ENCODE measurements at regions of chr10 and their contacts with region 1.

Region 1: GRCh38 chr10:133329491-133330202 is 7.0 kb downstream of the CALY start:
- DNase-seq: peak; percentile 87
- ATAC-seq: peak; percentile 83
- H3K4me3 ChIP-seq: peak overlapping the region; percentile 60
- H3K27ac ChIP-seq: no peak overlapping the region
- H3K4me1 ChIP-seq: peaks cover 15% of the 10 kb centered on the region
- H3K27me3 ChIP-seq: peaks cover 14% of the 10 kb centered on the region
- CTCF ChIP-seq: peak; percentile 84

Region 2: GRCh38 chr10:133509700-133510099 is 180.1 kb after region 1 on chr10:
- CTCF ChIA-PET with region 1: no interaction called
- POLR2A ChIA-PET with region 1: no interaction called
- intact Hi-C with region 1: loop called (anchors 10 kb)
- DNase-seq: no peak
- ATAC-seq: no peak
- H3K4me3 ChIP-seq: no peak overlapping the region
- H3K27ac ChIP-seq: no peak overlapping the region
- H3K4me1 ChIP-seq: no peaks in the 10 kb centered on the region
- H3K27me3 ChIP-seq: no peaks in the 10 kb centered on the region
- CTCF ChIP-seq: no peak

Region 3: GRCh38 chr10:133537551-133538545 is 208.2 kb after region 1 on chr10:
- CTCF ChIA-PET with region 1: no interaction called
- POLR2A ChIA-PET with region 1: no interaction called
- intact Hi-C with region 1: no loop called
- DNase-seq: peak; percentile 3
- ATAC-seq: no peak
- H3K4me3 ChIP-seq: no peak overlapping the region
- H3K27ac ChIP-seq: no peak overlapping the region
- H3K4me1 ChIP-seq: no peaks in the 10 kb centered on the region
- H3K27me3 ChIP-seq: no peaks in the 10 kb centered on the region
- CTCF ChIP-seq: no peak

Region 4: DNA sequence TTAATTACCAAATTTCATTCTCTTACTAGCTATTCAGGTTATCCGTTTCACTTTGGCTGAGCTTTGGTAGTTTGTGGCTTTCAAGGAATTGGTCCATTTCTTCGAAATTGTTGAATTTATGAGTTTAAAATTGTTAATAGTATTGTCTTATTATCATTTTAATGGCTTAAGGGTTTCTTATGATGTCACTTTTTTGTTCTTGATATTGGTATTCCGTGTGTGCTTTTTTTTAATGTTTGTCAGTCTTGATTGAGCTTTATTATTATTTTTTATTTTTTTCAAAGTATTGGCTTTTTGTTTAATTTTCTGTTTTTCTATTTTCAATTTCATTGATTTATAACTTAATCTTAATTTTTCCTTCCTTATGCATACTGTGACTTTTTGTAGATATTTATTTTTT is 271.0 kb after region 1 on chr10:
- CTCF ChIA-PET with region 1: no interaction called
- POLR2A ChIA-PET with region 1: no interaction called
- intact Hi-C with region 1: no loop called
- DNase-seq: no peak
- ATAC-seq: no peak
- H3K4me3 ChIP-seq: no peak overlapping the region
- H3K27ac ChIP-seq: no peak overlapping the region
- H3K4me1 ChIP-seq: no peaks in the 10 kb centered on the region
- H3K27me3 ChIP-seq: peaks cover 62% of the 10 kb centered on the region
- CTCF ChIP-seq: no peak